Panc1 (cell line): ENCODE measurements at regions of chr14 and their contacts with region 1.

Region 1: GRCh38 chr14:99737451-99737951 is 53.4 kb downstream of the CYP46A1 start:
- DNase-seq: no peak
- ATAC-seq: peak; percentile 92
- H3K4me3 ChIP-seq: peak overlapping the region; percentile 45 to 54
- H3K27ac ChIP-seq: peak overlapping the region; percentile 23; the same call in 1 of the 2 replicates
- H3K4me1 ChIP-seq: peaks cover 16% of the 10 kb centered on the region
- H3K27me3 ChIP-seq: no peaks in the 10 kb centered on the region
- CTCF ChIP-seq: no peak

Region 2: GRCh38 chr14:99819514-99819913 is 82.0 kb after region 1 on chr14:
- CTCF ChIA-PET with region 1: no interaction called
- POLR2A ChIA-PET with region 1: no interaction called
- in situ Hi-C with region 1: no loop called
- intact Hi-C with region 1: loop called (anchors 5 kb)
- DNase-seq: no peak
- ATAC-seq: no peak
- H3K4me3 ChIP-seq: no peak overlapping the region
- H3K27ac ChIP-seq: no peak overlapping the region
- H3K4me1 ChIP-seq: no peaks in the 10 kb centered on the region
- H3K27me3 ChIP-seq: no peaks in the 10 kb centered on the region
- CTCF ChIP-seq: no peak

Region 3: DNA sequence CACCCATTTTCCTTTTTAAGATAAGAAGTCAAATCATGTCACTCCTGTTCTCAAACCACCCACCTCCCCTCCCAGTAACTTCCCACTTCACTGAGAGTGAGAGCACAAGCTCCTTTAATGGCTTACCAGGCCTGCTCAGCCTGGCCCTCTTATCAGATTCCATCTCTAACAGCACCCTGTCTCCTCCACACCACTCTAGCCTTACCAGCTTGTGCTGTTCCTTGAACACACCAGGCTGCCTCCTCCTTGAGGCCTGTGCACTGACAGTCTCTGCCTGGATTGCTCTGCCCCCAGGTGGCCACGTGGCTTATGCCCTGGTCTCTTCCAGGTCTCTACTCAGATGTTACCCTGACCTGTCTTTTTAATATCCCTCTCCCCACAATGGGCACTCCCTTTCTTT is 287.6 kb after region 1 on chr14:
- CTCF ChIA-PET with region 1: no interaction called
- POLR2A ChIA-PET with region 1: interaction called, 12 read pairs
- in situ Hi-C with region 1: no loop called
- intact Hi-C with region 1: no loop called
- DNase-seq: no peak
- ATAC-seq: peak; percentile 94
- H3K4me3 ChIP-seq: no peak overlapping the region
- H3K27ac ChIP-seq: no peak overlapping the region
- H3K4me1 ChIP-seq: peaks cover 13% of the 10 kb centered on the region
- H3K27me3 ChIP-seq: no peaks in the 10 kb centered on the region
- CTCF ChIP-seq: peak; percentile 65